ENCODE measurements at regions of chr19 and their contacts with region 1.

Region 1: DNA sequence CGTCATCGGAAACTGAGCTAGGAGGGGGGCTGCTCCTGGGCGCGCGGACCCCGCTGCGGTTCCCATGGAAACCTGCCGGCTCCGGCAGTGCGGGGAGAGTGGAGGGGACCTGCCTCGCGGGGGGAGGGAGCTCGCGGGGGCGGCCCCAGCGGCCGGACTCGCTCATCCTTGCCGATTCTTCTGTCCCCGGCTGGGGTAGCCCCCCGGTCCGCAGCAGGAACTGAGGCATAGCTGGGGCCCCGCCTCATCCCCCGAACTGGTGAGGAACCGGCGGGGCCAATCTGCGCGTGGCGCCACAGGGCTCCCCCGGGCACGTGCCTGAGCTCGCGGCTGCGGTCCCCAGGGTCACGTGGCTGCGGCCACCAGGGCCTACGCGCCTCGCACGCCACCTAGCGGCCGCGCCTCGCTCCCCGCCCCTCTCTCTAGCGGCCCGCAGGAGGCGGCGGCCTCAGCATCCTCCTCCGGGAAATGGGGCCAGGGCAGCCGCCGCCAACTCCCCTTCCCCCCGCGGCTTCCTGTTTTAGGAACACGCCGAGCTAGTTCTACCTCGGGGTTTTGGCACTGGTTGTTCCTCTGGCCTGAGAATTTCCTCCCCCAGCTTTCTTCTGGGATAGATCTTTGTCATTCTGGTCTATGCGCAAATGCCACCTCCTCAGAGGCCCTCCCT is 1.7 kb upstream of the ELAVL3 start:
- DNase-seq: peak; percentile 84 to 93 (median 89)
- H3K4me3 ChIP-seq: peak overlapping the region; percentile 41 to 95 (median 74)
- H3K27ac ChIP-seq: peak overlapping the region; percentile 73 to 100 (median 98)
- H3K27me3 ChIP-seq: no peaks in the 10 kb centered on the region
- CTCF ChIP-seq: peak; percentile 82 to 100 (median 98)

Region 2: DNA sequence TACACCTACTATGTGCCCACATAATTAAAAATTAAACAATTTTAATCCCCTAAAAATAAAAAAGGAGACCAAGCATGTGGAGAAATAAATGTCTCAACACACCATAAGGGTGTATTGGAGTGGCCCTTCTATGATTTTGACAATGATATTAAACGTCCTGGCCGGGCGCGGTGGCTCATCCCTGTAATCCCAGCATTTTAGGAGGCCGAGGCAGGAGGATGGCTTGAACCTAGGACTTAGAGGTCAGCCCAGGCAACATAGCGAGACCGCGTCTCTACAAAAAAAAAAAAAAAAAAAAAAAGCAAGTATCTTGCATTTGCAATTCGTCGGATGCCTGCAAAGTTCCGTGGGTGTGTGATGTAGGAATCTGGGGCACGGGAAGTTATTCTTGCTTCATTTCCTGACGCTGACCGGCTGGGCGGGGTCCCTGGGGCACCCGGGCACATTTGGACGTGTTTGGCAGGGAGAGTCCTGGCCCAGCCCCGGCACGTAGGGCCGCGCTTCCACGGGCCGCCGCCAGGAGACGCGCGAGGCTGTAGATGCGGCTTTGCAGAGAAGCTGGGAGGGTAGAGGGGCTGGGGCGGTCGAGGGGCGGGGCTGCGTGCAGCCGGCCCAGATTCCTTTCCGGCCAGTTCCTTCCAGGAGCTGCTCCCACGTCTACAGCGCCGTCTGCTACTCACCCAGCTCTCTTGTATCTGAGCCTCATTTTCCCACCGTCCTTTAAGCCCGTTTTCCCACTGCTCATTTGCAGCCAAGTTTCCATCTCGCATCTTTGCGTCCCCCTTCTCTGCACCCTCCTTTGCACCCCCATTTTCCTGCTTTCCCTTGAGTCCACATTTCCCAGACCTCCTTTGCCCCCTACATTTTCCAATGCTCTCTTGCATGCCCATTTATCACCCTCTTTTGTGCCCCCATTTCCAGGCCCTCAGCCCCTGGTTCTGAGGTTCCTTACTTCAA is 188.8 kb before region 1 on chr19:
- intact Hi-C with region 1: loop called (anchors 2 kb)
- DNase-seq: peak; percentile 87 to 93 (median 91)
- H3K4me3 ChIP-seq: peak overlapping the region; percentile 12 to 65 (median 47)
- H3K27ac ChIP-seq: peak overlapping the region in 53 of 59 donors; percentile 15 to 86 (median 70)
- H3K27me3 ChIP-seq: no peaks in the 10 kb centered on the region
- CTCF ChIP-seq: peak; percentile 81 to 99 (median 95)

Region 3: DNA sequence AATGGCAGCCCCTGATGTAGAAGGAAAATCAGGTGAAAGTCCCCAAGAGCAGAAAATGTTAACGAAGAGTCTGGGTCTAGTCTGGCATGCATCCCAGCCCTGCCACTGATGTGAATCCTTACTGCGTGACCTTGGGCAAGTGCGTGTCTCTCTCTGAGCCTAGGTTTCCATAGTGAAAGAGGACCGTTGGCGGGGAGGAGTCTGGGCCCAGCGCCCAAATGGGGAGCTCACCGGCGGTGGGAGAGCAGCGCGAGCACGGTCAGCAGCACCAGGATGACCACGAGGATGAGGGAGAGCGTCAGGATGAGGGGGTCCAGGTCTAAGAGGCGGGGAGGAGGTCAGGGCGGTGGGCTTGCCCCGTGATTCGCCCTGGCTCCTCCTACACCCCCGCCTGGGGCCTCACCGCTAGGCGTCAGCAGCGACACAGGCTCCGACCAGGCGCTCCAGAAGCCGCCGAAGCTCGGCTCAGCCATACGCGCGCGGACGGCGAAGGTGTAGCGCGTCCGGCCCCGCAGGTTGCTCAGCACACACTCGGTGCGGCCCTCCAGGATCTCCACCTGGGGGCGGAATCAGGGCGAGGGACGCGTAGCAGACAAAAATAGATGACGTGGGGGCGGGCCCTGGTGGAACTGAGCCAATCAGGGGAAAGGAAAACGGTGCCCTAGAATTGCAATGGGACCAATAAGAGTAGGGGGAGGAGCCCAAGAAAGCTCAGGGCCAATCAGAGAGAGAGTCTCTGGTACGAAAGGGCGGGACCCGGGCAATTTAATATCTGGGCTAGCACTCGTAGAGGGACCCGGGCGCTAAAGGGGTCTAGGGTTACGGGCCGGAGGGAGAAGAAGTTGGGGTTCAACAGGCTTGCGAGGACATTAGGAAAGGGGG is 101.6 kb before region 1 on chr19:
- intact Hi-C with region 1: loop called (anchors 2 to 5 kb)
- DNase-seq: peak; percentile 84 to 98 (median 95)
- H3K4me3 ChIP-seq: peak overlapping the region; percentile 57 to 96 (median 79)
- H3K27ac ChIP-seq: peak overlapping the region; percentile 21 to 97 (median 91)
- H3K27me3 ChIP-seq: peaks cover 0 to 26% (median 12%) of the 10 kb centered on the region in 45 donors
- CTCF ChIP-seq: peak; percentile 48 to 94 (median 83)

Region 4: GRCh38 chr19:11446652-11447301 is 35.7 kb before region 1 on chr19:
- intact Hi-C with region 1: loop called (anchors 2 to 5 kb)
- DNase-seq: peak; percentile 71 to 92 (median 84)
- H3K4me3 ChIP-seq: peak overlapping the region in 56 of 59 donors; percentile 15 to 72 (median 50)
- H3K27ac ChIP-seq: peak overlapping the region; percentile 7 to 100 (median 95)
- H3K27me3 ChIP-seq: no peaks in the 10 kb centered on the region
- CTCF ChIP-seq: peak; percentile 51 to 94 (median 86)

Region 5: DNA sequence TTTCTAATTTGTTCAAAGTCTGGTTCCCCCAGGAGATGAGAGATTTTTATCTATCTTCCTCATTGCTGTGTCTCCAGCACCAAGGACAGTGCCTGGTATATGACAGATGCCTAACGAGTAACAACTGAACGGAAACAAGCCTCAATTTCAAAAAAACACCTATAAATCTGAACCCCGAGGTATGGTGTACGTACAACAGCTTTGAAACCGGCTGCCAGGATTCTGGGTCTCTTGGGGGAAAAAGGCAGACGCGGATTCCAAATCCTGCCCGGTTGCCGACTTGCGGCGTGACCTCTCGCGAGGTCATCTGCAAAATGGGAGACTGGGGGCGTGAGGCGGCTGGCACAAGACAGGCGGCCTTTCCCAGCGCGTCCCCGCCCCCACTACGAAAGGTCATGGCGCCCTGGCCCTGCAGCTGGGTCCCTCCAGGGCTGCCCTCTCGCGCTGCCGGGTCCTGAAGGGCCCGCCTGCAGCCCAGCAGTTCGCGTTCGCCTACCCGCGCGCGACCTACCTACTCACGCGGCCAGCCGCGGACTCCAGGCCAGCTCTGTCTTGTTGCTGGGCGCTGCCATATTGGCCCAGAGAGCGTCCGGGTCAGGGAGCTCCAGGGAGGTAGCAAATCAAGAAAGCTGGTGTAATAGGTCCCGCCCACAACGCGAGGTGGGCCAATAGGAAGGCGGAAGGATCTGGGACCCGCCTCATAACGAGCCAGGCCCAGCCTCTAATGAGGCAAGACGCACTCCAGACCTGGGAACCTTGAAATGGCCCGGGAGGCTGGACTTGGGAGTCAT is 46.2 kb after region 1 on chr19 and contains the start of gene ECSIT:
- intact Hi-C with region 1: loop called in 1 of 2 experiments (anchors 1 kb)
- DNase-seq: peak; percentile 91 to 99 (median 98)
- H3K4me3 ChIP-seq: peak within 1 kb of the TSS; percentile 53 to 100 (median 87)
- H3K27ac ChIP-seq: peak within 1 kb of the TSS; percentile 69 to 98 (median 90)
- H3K27me3 ChIP-seq: no peaks in the 10 kb centered on the region
- CTCF ChIP-seq: peak in 27 of 56 donors; percentile 1 to 56 (median 23)
- total RNA-seq, gene ECSIT: 46.5 to 84.8 (median 66.3) TPM

Measured in dorsolateral prefrontal cortex (tissue), 120 donors.